ENCODE measurements at regions of chr6 and their contacts with region 1.

Region 1: DNA sequence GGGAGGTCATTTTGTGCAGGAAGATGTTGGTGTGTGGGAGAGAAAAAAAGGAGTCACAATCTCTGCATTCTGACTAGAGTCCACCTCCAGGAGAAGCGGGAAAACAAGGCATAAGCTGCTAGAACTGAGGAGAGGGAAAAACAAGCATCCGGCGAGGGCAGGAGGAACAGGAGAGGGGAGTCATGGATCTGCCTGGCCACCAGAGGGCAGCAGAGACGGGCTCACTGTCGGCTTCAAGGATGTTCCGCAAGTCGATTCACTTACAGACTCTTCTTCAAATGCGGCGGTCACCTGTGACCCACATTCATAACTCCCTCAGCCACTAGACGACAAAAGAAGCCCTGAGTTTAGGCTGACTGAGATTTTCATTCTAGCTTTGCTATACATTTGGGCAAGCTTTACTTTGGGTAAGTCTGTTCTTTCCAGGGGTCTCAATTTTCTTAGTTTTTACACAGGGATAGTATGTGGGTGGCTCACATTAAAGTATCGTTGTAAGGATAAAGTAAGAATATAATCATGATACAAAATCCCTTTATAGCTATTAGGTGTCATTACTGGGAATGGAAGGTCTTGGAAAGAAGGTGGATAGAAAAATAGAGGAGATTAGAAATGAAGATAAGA is 6.6 kb upstream of the BTNL2 start:
- DNase-seq: peak; percentile 40
- ATAC-seq: peak; percentile 94
- H3K4me3 ChIP-seq: no peak overlapping the region
- H3K27ac ChIP-seq: no peak overlapping the region
- H3K4me1 ChIP-seq: no peaks in the 10 kb centered on the region
- H3K27me3 ChIP-seq: no peaks in the 10 kb centered on the region; a peak in 2 of 4 replicates
- CTCF ChIP-seq: peak; percentile 84 to 96 (median 94)
- EP300 ChIP-seq: no peak
- POLR2A ChIP-seq: no peak
- RAD21 ChIP-seq: peak; percentile 83

Region 2: DNA sequence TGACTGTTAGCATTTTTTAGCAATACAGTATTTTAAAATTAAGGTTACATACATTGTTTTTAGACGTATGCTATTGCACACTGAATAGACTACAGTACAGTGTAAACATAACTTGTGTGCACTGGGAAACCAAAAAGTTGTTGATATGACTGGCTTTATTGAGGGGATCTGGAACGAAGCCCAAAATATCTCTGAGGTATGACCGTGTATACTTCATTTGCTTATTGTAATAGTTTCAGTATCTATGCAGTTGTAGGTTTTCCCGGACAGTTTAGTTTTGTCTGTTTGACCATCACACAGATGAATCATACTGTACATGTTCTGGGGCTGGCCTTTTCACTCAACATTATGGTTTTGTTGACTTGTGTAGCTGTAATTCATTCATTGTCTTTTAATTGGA is 504.7 kb before region 1 on chr6:
- CTCF ChIA-PET with region 1: no interaction called
- POLR2A ChIA-PET with region 1: no interaction called
- RAD21 ChIA-PET with region 1: no interaction called
- SMC1A ChIA-PET with region 1: no interaction called
- in situ Hi-C with region 1: no loop called
- intact Hi-C with region 1: no loop called
- DNase-seq: peak; percentile 68
- ATAC-seq: peak; percentile 95
- H3K4me3 ChIP-seq: no peak overlapping the region
- H3K27ac ChIP-seq: no peak overlapping the region
- H3K4me1 ChIP-seq: peaks cover 25% of the 10 kb centered on the region
- H3K27me3 ChIP-seq: no peaks in the 10 kb centered on the region
- CTCF ChIP-seq: no peak
- EP300 ChIP-seq: peak in 1 of 2 experiments; percentile 51; a peak in 1 of 4 replicates
- POLR2A ChIP-seq: no peak
- RAD21 ChIP-seq: no peak

Region 3: DNA sequence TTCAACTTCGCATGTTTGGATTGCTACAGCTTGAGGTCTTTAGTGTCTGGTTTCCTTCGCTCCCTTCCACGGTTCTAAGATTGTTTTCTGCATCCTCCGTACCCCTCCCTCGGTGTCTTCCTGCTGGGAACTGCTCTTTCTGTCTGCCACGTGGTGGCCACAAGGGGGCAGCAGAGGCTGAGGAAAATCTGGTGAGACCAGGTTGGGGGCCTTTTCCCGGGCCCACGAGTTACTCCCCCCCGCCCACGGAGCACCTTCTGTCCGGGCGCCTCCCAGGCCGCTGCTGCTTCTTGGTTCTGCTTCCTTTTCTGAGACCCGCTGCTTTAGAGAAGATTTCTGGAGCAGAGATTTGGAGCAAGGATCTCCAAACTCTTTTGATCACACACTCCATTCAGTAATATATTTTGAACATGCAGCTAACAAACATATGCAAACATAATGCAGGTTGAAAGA is 168.6 kb before region 1 on chr6:
- CTCF ChIA-PET with region 1: interaction called, 98 read pairs
- POLR2A ChIA-PET with region 1: no interaction called
- RAD21 ChIA-PET with region 1: interaction called, 12 read pairs
- SMC1A ChIA-PET with region 1: interaction called, 32 read pairs
- in situ Hi-C with region 1: loop called (anchors 5 kb)
- intact Hi-C with region 1: loop called (anchors 1 kb)
- DNase-seq: no peak
- ATAC-seq: peak; percentile 87
- H3K4me3 ChIP-seq: no peak overlapping the region; the same call in 1 of the 2 replicates
- H3K27ac ChIP-seq: no peak overlapping the region
- H3K4me1 ChIP-seq: no peaks in the 10 kb centered on the region
- H3K27me3 ChIP-seq: no peaks in the 10 kb centered on the region; a peak in 1 of 4 replicates
- CTCF ChIP-seq: peak; percentile 85 to 92 (median 87)
- EP300 ChIP-seq: no peak
- POLR2A ChIP-seq: no peak
- RAD21 ChIP-seq: peak; percentile 86

Region 4: DNA sequence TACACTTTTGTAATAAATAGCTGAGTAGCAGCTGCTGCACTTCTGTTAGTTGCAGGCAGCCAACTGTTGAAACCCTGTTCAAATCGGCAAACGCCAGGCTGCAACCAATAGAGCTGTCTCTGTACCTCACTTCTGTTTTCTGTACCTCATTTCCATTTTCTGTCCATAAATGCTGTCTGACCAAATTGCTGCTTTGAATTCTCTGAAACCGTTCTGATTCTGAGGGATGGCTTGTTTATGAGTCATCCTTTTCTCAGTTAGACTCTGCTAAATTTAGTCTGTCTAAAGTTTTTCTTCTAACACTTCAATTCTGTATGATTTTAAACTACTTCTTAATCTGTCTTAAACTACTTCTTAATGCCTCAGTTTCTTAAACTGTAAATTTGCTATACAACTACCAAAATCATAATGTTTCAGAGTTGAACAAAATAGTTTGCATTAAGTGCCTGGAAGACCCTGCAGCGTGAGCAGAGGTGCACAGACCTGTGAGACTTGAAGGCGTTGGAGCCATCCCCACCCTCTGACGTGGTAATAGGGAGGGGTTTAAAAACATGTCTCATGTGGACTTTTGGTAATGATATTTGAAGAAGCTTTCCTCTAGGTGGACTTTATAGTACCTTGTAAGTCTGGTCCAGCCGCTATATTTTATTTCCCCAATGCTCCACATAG is 16.2 kb before region 1 on chr6:
- CTCF ChIA-PET with region 1: interaction called, 7 read pairs
- POLR2A ChIA-PET with region 1: no interaction called
- RAD21 ChIA-PET with region 1: interaction called, 3 read pairs
- SMC1A ChIA-PET with region 1: interaction called, 10 read pairs
- in situ Hi-C with region 1: no loop called
- intact Hi-C with region 1: no loop called
- DNase-seq: peak; percentile 73
- ATAC-seq: peak; percentile 98
- H3K4me3 ChIP-seq: peak overlapping the region; percentile 6; the same call in 1 of the 2 replicates
- H3K27ac ChIP-seq: no peak overlapping the region
- H3K4me1 ChIP-seq: peaks cover 8% of the 10 kb centered on the region
- H3K27me3 ChIP-seq: no peaks in the 10 kb centered on the region
- CTCF ChIP-seq: no peak
- EP300 ChIP-seq: no peak; a peak in 1 of 4 replicates
- POLR2A ChIP-seq: no peak
- RAD21 ChIP-seq: no peak

Region 5: GRCh38 chr6:32424589-32425300 is 11.2 kb after region 1 on chr6:
- CTCF ChIA-PET with region 1: interaction called, 22 read pairs
- POLR2A ChIA-PET with region 1: no interaction called
- RAD21 ChIA-PET with region 1: interaction called, 16 read pairs
- SMC1A ChIA-PET with region 1: interaction called, 22 read pairs
- in situ Hi-C with region 1: no loop called
- intact Hi-C with region 1: no loop called
- DNase-seq: no peak
- ATAC-seq: no peak
- H3K4me3 ChIP-seq: no peak overlapping the region
- H3K27ac ChIP-seq: no peak overlapping the region
- H3K4me1 ChIP-seq: no peaks in the 10 kb centered on the region
- H3K27me3 ChIP-seq: peaks cover 1 to 3% of the 10 kb centered on the region in 2 experiments; a peak in 2 of 4 replicates
- CTCF ChIP-seq: no peak
- EP300 ChIP-seq: no peak
- POLR2A ChIP-seq: no peak
- RAD21 ChIP-seq: no peak

Region 6: GRCh38 chr6:32491700-32492099 is 78.2 kb after region 1 on chr6:
- CTCF ChIA-PET with region 1: no interaction called
- POLR2A ChIA-PET with region 1: no interaction called
- RAD21 ChIA-PET with region 1: no interaction called
- SMC1A ChIA-PET with region 1: no interaction called
- in situ Hi-C with region 1: no loop called
- intact Hi-C with region 1: no loop called
- DNase-seq: no peak
- ATAC-seq: no peak
- H3K4me3 ChIP-seq: no peak overlapping the region
- H3K27ac ChIP-seq: no peak overlapping the region
- H3K4me1 ChIP-seq: no peaks in the 10 kb centered on the region
- H3K27me3 ChIP-seq: no peaks in the 10 kb centered on the region
- CTCF ChIP-seq: no peak
- EP300 ChIP-seq: no peak
- POLR2A ChIP-seq: no peak
- RAD21 ChIP-seq: no peak

Region 7: DNA sequence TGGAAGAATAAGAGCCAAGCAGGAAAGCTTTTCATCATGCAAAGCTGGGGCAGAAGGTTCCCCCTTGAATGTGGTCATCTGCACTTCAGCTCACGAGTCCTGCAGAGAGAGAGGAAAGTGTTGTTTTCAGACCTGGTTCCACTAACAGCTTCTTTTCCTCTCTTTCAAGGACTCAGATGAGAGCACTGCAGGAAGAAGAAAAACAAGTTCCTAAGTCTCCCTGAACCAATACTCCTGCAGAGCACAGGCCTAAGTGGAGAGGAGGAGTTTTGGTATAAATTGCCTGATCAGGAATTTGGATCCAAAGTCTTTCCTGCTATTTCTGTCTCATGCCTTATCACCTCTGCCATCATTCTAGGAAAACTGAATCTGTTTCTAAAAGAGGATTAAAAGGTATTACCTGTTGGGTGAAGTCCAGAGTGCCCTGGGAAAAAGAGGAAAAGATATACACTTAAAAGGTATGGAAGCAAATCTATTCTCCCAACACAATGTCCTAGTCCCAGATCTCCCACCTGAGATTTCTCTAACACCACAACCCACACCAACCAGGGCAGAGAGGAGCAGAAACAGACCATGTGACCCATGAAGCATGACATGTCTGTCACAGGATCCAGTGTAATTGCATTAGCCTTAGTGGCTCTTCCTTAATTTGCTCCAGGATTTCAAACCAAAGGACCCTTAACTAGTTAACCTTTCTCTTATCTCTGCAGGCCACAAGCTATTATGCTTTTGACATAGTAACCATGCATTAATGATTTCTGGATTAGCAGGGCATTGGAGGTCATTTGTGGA is 104.3 kb after region 1 on chr6:
- CTCF ChIA-PET with region 1: no interaction called
- POLR2A ChIA-PET with region 1: no interaction called
- RAD21 ChIA-PET with region 1: no interaction called
- SMC1A ChIA-PET with region 1: no interaction called
- in situ Hi-C with region 1: no loop called
- intact Hi-C with region 1: no loop called
- DNase-seq: no peak
- ATAC-seq: no peak
- H3K4me3 ChIP-seq: no peak overlapping the region
- H3K27ac ChIP-seq: no peak overlapping the region
- H3K4me1 ChIP-seq: no peaks in the 10 kb centered on the region
- H3K27me3 ChIP-seq: no peaks in the 10 kb centered on the region
- CTCF ChIP-seq: no peak
- EP300 ChIP-seq: no peak
- POLR2A ChIP-seq: no peak
- RAD21 ChIP-seq: no peak

Region 8: DNA sequence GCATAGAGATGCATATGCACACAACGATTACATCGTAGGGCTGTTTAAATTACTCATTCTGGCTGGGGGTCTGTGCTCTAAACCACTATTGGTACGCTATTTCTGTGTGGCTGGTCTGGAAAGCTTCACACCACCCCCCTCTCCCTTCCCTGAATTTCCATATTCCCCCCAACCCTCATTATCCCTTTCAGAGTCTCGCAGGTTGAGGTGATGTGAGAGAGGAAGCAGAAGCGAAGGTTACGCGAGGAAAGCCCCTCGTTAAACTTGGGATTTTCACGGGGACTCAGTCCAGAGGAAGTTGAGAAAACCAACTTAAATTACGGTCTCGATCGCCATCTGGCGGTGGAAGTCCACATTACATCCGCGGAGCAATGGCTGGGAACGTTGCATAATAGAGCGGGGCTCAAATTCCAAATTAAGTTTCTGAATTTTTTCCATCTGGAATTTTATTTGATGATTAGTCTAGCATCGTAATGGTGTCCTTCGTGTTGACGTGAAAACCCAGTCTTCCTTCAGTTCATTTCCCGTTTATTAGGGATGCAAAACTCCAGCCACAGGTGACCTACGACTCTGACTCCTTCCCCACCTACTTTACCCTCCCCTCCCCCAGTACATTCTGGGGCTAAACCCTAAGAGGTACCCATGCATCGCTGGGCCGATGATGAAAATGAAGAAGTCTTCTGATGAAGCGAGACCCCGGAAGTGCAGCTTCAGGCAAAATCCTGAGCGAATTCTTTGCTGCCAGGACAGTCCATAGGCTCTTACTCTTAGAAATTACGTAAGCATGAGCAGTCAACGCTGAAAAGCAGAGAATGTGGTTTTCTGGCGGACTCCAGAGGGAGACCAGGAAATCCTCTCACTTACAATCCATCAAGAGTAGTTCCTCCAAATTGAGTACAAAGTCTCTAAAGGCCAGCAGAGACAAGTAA is 383.6 kb after region 1 on chr6:
- CTCF ChIA-PET with region 1: interaction called, 36 read pairs
- POLR2A ChIA-PET with region 1: no interaction called
- RAD21 ChIA-PET with region 1: interaction called, 13 read pairs
- SMC1A ChIA-PET with region 1: interaction called, 51 read pairs
- in situ Hi-C with region 1: loop called (anchors 5 kb)
- intact Hi-C with region 1: loop called (anchors 1 kb)
- DNase-seq: no peak
- ATAC-seq: peak; percentile 89
- H3K4me3 ChIP-seq: peak overlapping the region; percentile 29; the same call in 1 of the 2 replicates
- H3K27ac ChIP-seq: peak overlapping the region; percentile 32
- H3K4me1 ChIP-seq: peaks cover 19% of the 10 kb centered on the region
- H3K27me3 ChIP-seq: peaks cover 0 to 5% of the 10 kb centered on the region in 2 experiments; a peak in 2 of 4 replicates
- CTCF ChIP-seq: peak; percentile 69 to 89 (median 86)
- EP300 ChIP-seq: no peak
- POLR2A ChIP-seq: no peak
- RAD21 ChIP-seq: peak; percentile 74

Region 9: DNA sequence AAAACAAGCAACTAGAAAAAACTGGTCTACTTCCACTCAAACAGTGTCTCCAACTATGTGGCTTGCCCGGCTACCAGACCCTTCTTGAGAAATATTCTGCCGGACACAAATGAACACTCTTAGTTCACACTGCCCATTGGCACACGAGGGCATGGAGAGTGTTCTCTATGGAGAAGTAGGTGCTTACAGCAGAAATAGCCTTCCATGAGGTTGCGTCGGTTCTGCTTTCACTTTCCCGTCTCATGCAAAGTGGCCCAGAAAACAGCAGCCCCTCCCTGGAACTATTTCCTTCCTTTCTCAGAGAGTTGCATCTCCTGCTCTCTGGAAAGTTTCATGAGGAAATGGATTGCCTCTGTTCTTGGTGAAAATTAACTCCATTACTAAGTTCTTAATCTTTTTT is 605.4 kb after region 1 on chr6:
- CTCF ChIA-PET with region 1: no interaction called
- POLR2A ChIA-PET with region 1: no interaction called
- RAD21 ChIA-PET with region 1: no interaction called
- SMC1A ChIA-PET with region 1: no interaction called
- in situ Hi-C with region 1: no loop called
- intact Hi-C with region 1: no loop called
- DNase-seq: peak; percentile 38
- ATAC-seq: peak; percentile 86
- H3K4me3 ChIP-seq: no peak overlapping the region
- H3K27ac ChIP-seq: peak overlapping the region; percentile 70
- H3K4me1 ChIP-seq: peaks cover 22% of the 10 kb centered on the region
- H3K27me3 ChIP-seq: no peaks in the 10 kb centered on the region
- CTCF ChIP-seq: no peak
- EP300 ChIP-seq: no peak
- POLR2A ChIP-seq: no peak
- RAD21 ChIP-seq: 0 out of 2 replicates have a peak, but pooled peaks have one; percentile 4